ENCODE measurements at regions of chr11 and their contacts with region 1.

Region 1: DNA sequence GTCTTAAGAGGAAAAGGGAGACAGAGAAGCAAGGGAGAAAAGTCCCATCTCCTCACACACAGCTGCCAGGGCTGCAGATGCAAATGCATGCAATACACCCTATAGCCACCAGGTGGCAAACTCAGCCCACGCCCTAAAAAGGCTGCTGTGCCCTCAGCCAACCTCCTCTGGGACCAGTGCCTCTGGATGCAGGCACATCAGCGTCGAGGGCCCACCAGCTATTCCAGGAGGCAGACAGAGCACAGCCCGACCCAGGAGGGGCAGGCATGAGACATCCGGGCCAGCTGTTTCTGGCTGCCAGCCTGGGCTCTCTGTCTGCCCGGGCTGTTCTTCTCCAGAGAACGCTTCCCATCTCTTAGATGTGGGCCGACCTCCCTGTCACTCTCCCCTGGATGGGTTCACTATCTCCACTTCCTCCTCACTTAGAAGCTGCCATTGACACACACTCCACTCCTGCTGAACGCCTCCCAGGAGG is 39.7 kb downstream of the TPBGL start:
- DNase-seq: peak; percentile 76 to 92
- H3K4me3 ChIP-seq: no peak overlapping the region
- H3K27ac ChIP-seq: no peak overlapping the region
- H3K4me1 ChIP-seq: peaks cover 0 to 6% (median 0%) of the 10 kb centered on the region in 4 experiments; a peak in 2 of 7 replicates
- H3K27me3 ChIP-seq: no peaks in the 10 kb centered on the region
- CTCF ChIP-seq: peak; percentile 94 to 100 (median 96)
- EP300 ChIP-seq: no peak
- POLR2A ChIP-seq: no peak
- RAD21 ChIP-seq: peak; percentile 98

Region 2: DNA sequence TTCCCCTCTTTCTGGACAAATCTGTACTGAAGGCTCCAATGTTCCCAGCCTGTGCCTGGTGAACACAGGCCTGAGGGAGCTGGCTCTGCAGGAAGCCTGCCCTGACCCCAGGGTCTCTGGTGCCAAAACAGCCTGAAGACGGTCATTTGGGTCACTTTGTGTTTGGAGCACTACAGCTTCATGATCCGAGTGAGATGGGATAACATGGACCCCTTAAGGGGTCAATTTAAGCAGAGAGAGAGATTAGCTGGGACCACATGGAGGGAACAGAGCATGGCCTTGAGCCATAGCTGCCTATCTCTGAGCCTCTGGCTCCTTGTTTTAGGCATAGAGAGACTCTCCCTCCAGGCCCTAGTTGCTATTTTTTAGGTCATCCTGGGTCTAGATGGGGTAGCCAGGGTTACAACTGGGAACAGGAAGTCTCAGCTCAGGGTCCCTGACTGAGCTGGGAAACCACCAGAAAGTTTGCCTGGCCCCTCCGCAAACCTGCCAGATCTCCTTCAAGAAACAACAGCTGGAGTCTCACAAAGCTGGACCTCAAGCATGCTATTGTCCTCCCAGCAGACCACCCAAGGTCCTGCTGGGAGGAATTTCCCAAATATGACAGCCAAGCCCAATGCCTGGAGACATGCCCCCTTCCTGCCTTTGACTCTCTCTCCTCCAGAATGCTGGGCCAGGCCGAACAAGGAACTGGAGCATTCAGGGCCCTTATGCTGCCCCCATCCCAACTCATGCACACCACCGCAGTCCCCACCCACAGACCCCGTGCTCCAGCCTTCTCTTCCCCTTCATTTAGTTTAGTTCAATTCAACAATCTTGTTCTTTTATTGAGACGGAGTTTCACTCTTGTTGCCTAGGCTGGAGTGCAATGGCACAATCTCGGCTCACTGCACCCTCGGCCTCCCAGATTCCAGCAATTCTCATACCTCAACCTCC is 125.3 kb before region 1 on chr11:
- CTCF ChIA-PET with region 1: no interaction called
- POLR2A ChIA-PET with region 1: no interaction called
- DNase-seq: no peak
- H3K4me3 ChIP-seq: no peak overlapping the region
- H3K27ac ChIP-seq: no peak overlapping the region
- H3K4me1 ChIP-seq: no peaks in the 10 kb centered on the region; a peak in 1 of 7 replicates
- H3K27me3 ChIP-seq: peaks cover 0 to 2% (median 0%) of the 10 kb centered on the region in 4 experiments; a peak in 2 of 7 replicates
- CTCF ChIP-seq: no peak
- EP300 ChIP-seq: no peak
- POLR2A ChIP-seq: no peak
- RAD21 ChIP-seq: no peak

Region 3: DNA sequence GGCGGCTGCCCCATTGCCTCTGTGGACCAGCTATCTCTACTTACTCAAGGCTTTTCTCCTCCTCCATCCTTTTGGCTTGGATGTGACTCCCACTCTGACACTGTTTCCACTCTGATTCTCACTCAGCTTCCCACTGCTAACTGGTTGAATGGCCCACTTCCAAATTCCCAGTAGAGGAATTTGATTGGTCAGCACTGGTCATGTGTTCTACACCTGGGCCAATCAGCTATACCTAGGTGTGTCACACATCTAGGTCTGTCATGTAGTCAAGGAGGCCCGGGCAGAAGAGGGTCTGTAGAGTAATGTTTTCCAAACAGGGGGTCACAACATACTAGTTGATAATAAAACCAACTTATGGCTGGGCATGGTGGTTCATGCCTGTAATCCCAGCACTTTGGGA is 13.6 kb after region 1 on chr11:
- CTCF ChIA-PET with region 1: interaction called, 62 read pairs
- POLR2A ChIA-PET with region 1: interaction called, 4 read pairs
- DNase-seq: no peak
- H3K4me3 ChIP-seq: no peak overlapping the region
- H3K27ac ChIP-seq: no peak overlapping the region
- H3K4me1 ChIP-seq: no peaks in the 10 kb centered on the region
- H3K27me3 ChIP-seq: no peaks in the 10 kb centered on the region
- CTCF ChIP-seq: no peak
- EP300 ChIP-seq: no peak
- POLR2A ChIP-seq: no peak
- RAD21 ChIP-seq: no peak

Region 4: GRCh38 chr11:75323609-75324008 is 43.3 kb after region 1 on chr11:
- CTCF ChIA-PET with region 1: interaction called, 15 read pairs
- POLR2A ChIA-PET with region 1: no interaction called
- DNase-seq: no peak
- H3K4me3 ChIP-seq: no peak overlapping the region
- H3K27ac ChIP-seq: no peak overlapping the region
- H3K4me1 ChIP-seq: peaks cover 0 to 5% (median 0%) of the 10 kb centered on the region in 4 experiments; a peak in 4 of 7 replicates
- H3K27me3 ChIP-seq: no peaks in the 10 kb centered on the region
- CTCF ChIP-seq: no peak
- EP300 ChIP-seq: no peak
- POLR2A ChIP-seq: no peak
- RAD21 ChIP-seq: no peak

Region 5: DNA sequence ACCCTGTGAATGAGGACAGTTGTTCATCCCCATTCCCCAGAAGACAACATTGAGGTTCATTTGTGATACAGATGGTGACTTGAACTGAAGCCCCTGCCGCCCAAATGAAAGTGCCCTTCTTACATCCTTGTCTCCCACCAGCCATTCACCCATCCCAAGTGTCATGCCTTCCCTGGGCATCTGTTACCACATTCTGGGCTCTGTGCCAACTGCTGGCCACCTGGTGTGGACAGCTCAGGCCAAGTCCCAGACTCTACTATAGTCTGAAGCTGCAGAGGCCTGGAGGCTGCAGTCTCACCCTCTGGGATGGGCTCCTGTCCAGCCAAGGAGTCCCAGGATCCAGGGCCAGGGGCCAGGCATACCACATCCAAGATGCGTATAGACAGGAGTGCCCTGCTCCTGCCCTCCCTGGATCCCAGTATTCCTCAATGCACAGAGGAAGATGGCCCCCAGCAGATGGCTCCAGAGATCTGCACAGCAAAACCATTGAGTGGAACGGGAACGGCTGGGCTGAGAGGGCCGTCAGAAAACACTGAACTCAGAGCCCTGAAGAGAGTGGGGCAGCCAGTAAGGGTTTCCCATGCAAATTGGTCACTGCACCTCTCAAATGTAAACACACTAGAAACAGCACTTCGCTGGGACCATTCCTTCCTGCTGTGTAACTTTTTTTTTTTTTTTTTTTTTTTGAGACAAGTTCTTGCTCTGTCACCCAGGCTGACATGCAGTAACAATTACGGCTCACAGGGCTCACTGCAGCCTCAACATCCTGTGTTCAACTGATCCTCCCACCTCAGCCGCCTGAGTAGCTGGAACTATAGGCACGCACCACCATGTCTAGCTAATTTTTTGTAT is 48.4 kb after region 1 on chr11:
- CTCF ChIA-PET with region 1: interaction called, 17 read pairs
- POLR2A ChIA-PET with region 1: interaction called, 5 read pairs
- DNase-seq: peak in 1 of 2 experiments; percentile 65
- H3K4me3 ChIP-seq: no peak overlapping the region
- H3K27ac ChIP-seq: no peak overlapping the region
- H3K4me1 ChIP-seq: peaks cover 0 to 13% (median 2%) of the 10 kb centered on the region in 4 experiments; a peak in 4 of 7 replicates
- H3K27me3 ChIP-seq: no peaks in the 10 kb centered on the region
- CTCF ChIP-seq: peak; percentile 60 to 77 (median 70)
- EP300 ChIP-seq: no peak
- POLR2A ChIP-seq: no peak
- RAD21 ChIP-seq: peak; percentile 86 to 90

Region 6: GRCh38 chr11:75333807-75334140 is 53.5 kb after region 1 on chr11:
- CTCF ChIA-PET with region 1: interaction called, 45 read pairs
- POLR2A ChIA-PET with region 1: interaction called, 5 read pairs
- DNase-seq: no peak
- H3K4me3 ChIP-seq: no peak overlapping the region
- H3K27ac ChIP-seq: no peak overlapping the region
- H3K4me1 ChIP-seq: peaks cover 0 to 14% (median 8%) of the 10 kb centered on the region in 4 experiments; a peak in 6 of 7 replicates
- H3K27me3 ChIP-seq: no peaks in the 10 kb centered on the region
- CTCF ChIP-seq: no peak
- EP300 ChIP-seq: no peak
- POLR2A ChIP-seq: no peak
- RAD21 ChIP-seq: no peak

Region 7: GRCh38 chr11:75342903-75343870 is 62.9 kb after region 1 on chr11:
- CTCF ChIA-PET with region 1: interaction called, 45 read pairs
- POLR2A ChIA-PET with region 1: interaction called, 7 read pairs
- DNase-seq: no peak
- H3K4me3 ChIP-seq: no peak overlapping the region; a peak in 1 of 8 replicates
- H3K27ac ChIP-seq: no peak overlapping the region
- H3K4me1 ChIP-seq: peaks cover 17 to 45% (median 27%) of the 10 kb centered on the region in 4 experiments
- H3K27me3 ChIP-seq: no peaks in the 10 kb centered on the region
- CTCF ChIP-seq: no peak
- EP300 ChIP-seq: peak in 1 of 2 experiments; percentile 46; a peak in 1 of 3 replicates
- POLR2A ChIP-seq: no peak
- RAD21 ChIP-seq: no peak

Region 8: GRCh38 chr11:75428281-75428724 is 148.0 kb after region 1 on chr11:
- CTCF ChIA-PET with region 1: interaction called, 23 read pairs
- POLR2A ChIA-PET with region 1: interaction called, 4 read pairs
- DNase-seq: no peak
- H3K4me3 ChIP-seq: no peak overlapping the region
- H3K27ac ChIP-seq: no peak overlapping the region
- H3K4me1 ChIP-seq: peaks cover 0 to 23% (median 15%) of the 10 kb centered on the region in 4 experiments; a peak in 6 of 7 replicates
- H3K27me3 ChIP-seq: peaks cover 47 to 66% (median 60%) of the 10 kb centered on the region in 4 experiments
- CTCF ChIP-seq: no peak
- EP300 ChIP-seq: no peak
- POLR2A ChIP-seq: no peak
- RAD21 ChIP-seq: no peak